ENCODE measurements at regions of chr2 and their contacts with region 1.

Region 1: DNA sequence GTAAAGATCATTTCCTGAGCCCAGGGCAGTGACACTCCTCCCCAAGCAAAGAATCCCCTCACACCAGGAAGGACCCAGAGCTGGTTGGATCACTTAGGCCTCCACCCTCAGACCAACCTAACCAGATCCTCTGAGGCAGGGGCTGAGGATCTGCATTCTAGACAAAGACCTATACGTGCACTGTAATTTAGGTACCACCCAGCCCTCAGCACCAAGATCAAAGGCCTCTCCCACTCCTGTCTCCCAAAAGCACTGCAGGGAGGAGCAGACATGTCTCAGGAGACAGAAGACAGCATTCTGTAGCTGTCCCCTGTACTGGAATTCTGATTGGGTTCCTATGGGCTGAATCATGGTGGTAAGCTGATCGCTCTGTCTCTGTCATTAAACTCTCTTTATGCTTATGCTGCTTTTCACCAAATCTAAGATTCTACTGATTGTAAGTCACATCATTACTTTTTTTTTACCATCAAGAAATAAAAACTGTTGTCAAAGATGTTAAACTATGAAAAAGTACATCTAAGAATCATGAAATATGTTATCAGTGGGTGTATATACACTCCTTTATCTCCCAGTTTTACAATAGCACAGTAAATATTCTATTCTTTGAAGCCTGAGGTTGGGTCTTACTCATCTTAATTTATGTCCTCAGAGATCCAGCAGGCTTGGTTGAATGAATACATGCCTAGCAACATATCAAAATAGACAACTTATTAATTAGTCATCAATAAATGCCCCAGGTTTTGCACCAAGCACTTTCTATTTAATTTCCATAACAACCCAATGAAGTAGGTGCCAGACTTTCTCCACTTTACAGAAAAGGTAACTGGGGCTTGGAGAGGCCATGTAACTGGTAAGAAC is 28.3 kb downstream of the MCFD2 start:
- DNase-seq: no peak
- ATAC-seq: no peak

Region 2: DNA sequence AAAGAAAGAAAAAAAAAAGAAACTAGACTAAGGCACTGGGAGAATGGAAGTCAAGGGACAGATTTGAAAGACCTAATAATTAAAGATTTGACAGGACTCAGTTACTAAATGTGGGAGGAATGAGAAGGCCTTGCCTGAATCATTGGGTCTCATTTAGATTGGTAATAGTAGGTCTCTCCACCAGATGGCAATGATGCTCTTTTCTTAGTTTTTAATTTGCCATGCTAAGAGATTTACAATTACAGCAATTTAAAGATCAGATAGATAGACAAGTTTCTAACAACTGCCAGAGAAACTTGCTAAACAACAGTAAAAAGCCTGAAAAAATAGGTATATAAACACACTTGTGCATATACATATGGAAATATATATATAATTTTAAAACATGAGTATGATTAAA is 254.9 kb before region 1 on chr2:
- intact Hi-C with region 1: loop called (anchors 5 kb)
- DNase-seq: no peak
- ATAC-seq: no peak

Measured in left ventricle myocardium superior (tissue), 1 donor.